ENCODE measurements at regions of chr16 and their contacts with region 1.

Region 1: GRCh38 chr16:79150632-79151310 is 449.8 kb downstream of the MAF start:
- DNase-seq: no peak
- ATAC-seq: no peak
- H3K4me3 ChIP-seq: no peak overlapping the region
- H3K27ac ChIP-seq: no peak overlapping the region
- H3K4me1 ChIP-seq: no peaks in the 10 kb centered on the region
- H3K27me3 ChIP-seq: no peaks in the 10 kb centered on the region
- CTCF ChIP-seq: no peak
- POLR2A ChIP-seq: no peak

Region 2: DNA sequence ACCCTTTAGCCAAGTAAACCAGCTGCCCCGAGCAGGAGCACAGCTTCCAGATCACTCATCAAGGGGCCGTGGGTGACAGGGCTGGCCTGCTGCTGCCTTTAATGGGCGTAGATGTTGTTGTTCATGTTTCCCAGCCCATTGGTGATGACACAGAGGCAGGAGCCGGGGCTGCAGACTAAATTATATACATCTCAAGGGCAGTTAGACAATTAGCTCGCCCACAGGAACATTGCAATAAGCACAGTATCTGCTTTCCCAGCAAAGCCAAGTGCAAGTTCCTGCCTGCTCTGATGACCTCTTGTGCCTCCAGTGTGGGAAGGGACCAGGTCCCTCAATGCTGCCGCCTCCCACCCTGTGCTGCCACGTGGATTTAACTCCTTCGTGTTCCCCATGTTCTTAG is 36.0 kb before region 1 on chr16:
- in situ Hi-C with region 1: no loop called
- intact Hi-C with region 1: no loop called
- DNase-seq: no peak
- ATAC-seq: no peak
- H3K4me3 ChIP-seq: no peak overlapping the region
- H3K27ac ChIP-seq: no peak overlapping the region
- H3K4me1 ChIP-seq: no peaks in the 10 kb centered on the region
- H3K27me3 ChIP-seq: no peaks in the 10 kb centered on the region
- CTCF ChIP-seq: no peak
- POLR2A ChIP-seq: no peak

Region 3: GRCh38 chr16:79171919-79172705 is 21.3 kb after region 1 on chr16:
- in situ Hi-C with region 1: no loop called
- intact Hi-C with region 1: loop called (anchors 1 kb)
- DNase-seq: no peak
- ATAC-seq: no peak
- H3K4me3 ChIP-seq: no peak overlapping the region
- H3K27ac ChIP-seq: no peak overlapping the region
- H3K4me1 ChIP-seq: peaks cover 0 to 3% of the 10 kb centered on the region in 2 donors
- H3K27me3 ChIP-seq: no peaks in the 10 kb centered on the region
- CTCF ChIP-seq: no peak
- POLR2A ChIP-seq: no peak

Region 4: GRCh38 chr16:79253100-79253631 is 102.4 kb after region 1 on chr16:
- in situ Hi-C with region 1: no loop called
- intact Hi-C with region 1: no loop called
- DNase-seq: no peak
- ATAC-seq: no peak
- H3K4me3 ChIP-seq: no peak overlapping the region
- H3K27ac ChIP-seq: no peak overlapping the region
- H3K4me1 ChIP-seq: peaks cover 4 to 10% of the 10 kb centered on the region in 2 donors
- H3K27me3 ChIP-seq: no peaks in the 10 kb centered on the region
- CTCF ChIP-seq: no peak
- POLR2A ChIP-seq: no peak

Region 5: DNA sequence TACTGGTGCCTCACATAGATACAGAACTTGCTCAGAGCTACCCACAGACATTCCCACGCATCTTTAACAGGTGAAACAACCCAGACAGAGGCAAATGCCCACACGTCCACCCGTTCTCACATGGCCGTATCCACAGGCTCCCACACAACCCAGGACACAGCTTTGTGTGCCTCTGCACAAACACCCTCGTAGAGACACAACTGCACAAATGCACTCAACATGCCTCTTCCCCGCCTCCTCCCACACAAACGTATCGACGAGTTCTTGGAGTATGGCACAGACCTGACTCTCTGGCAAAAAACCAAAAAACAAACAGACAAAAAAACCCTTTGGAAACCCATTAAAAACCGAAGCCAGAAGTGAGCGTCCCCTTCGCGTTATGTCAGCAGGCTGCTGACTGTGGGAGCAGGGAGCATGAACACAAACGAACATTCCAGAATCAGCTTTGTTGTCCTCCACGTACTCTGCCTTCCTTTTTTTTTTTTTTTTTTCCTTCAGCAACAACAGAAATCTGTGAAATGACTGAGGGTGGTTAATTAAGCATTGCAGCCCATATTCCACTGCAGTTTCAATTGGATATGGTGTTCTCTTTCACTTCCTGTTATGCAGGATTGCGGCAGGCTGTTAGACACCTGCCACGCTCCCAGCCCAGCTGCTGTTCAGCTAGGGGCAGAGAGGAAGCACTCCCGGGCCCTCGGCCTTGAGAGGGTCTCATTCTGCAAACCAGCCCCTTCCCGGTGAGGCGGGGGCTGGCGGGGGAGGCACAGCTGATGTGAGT is 136.1 kb after region 1 on chr16:
- in situ Hi-C with region 1: no loop called
- intact Hi-C with region 1: no loop called
- DNase-seq: peak; percentile 16 to 42
- ATAC-seq: peak; percentile 55 to 61
- H3K4me3 ChIP-seq: peak overlapping the region; percentile 20 to 48 (median 36)
- H3K27ac ChIP-seq: no peak overlapping the region
- H3K4me1 ChIP-seq: peaks cover 27 to 31% of the 10 kb centered on the region in 2 donors
- H3K27me3 ChIP-seq: no peaks in the 10 kb centered on the region
- CTCF ChIP-seq: no peak
- POLR2A ChIP-seq: no peak